ENCODE measurements at regions of chr11 and their contacts with region 1.

Region 1: DNA sequence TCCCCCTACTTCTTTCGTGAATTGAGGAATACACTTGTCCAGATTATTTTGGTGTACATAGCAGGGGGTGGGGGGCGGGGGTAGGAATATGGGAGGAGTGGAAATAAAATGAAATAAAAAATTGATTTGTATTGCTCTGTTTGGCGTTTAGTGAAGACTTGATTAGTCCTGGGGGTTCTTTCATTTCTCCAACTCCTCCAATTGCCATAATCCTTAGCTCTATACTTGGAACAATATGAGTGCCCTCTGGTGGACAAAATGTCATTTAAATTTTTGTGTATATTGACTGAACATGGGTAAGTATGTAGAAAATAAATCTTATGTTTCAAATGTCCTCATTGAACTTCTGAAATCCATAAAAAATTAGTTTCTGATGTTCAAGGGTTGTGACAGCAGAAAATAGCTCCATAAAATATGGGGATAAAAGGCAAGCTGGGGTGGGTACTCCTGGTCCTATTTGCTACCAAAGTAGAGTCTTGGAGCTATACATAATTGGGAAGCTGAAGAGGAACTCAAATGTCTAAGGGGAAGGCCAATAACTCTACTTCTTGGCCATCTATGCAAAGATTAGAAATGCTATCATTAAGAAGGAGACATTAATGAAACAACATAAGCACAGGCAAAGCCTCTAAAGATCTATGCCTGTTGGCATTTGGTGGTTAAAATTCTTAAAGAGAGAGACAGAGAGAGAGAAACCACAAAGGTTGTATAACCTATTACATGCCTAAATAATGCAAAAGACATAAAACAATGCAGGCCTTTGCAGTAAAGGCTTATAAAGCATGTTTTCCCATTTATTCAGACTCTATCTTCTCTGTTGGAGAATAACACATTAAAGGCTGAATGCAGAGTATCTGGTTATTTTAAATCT is 421.6 kb downstream of the METTL15 start:
- DNase-seq: no peak
- ATAC-seq: peak in 2 of 4 donors; percentile 55 to 63
- H3K4me3 ChIP-seq: no peak overlapping the region
- H3K27ac ChIP-seq: no peak overlapping the region
- H3K4me1 ChIP-seq: no peaks in the 10 kb centered on the region
- H3K27me3 ChIP-seq: no peaks in the 10 kb centered on the region
- CTCF ChIP-seq: peak in 3 of 4 donors; percentile 13 to 27 (median 20)

Region 2: GRCh38 chr11:27612932-27613880 is 916.6 kb before region 1 on chr11:
- intact Hi-C with region 1: no loop called
- DNase-seq: no peak
- ATAC-seq: no peak
- H3K4me3 ChIP-seq: no peak overlapping the region
- H3K27ac ChIP-seq: no peak overlapping the region
- H3K4me1 ChIP-seq: no peaks in the 10 kb centered on the region
- H3K27me3 ChIP-seq: no peaks in the 10 kb centered on the region
- CTCF ChIP-seq: no peak

Region 3: DNA sequence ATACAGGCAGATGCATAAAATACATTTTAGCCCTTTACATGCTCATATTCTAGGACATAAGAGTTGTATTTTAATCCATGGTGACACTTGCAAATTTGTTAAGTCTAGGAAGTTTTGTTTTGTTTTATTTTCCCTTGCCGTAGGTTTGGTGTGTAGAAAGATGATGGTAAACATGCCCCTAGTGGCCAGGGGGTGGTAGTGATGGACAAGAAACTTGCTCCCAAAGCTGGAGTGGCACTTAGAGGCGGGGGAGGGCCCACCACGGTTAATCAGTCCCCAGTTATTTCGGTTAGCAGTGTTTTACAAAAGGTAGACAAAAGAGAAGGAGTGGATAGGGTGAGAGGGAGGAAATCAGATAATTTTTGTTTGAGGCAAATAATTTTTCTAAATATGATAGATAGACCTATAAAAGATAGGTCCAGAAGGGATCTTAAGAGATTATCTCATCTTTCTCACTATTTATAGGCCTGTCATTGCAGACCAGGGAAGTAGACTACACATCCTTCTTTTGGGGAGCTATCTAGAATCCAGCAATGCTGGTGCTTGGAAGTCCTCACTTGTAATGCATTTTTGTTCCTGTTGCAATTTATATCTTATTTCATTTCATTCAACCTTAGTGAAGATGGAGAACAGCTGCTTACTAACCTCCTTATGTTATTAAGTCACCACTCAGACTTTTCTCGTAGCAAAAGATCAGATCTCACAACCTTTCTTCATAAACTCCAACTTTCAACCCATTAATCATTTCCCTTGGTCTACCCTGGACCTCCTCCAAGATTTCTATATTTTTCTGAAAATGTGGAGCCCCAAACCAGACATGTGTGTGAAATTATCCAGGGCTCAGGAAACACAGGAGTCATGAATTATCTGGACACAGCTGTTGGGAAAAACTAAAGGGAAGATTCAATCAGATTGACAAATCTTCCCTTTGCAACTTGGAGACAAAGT is 823.6 kb before region 1 on chr11:
- intact Hi-C with region 1: loop called in 1 of 3 experiments (anchors 10 kb)
- DNase-seq: no peak
- ATAC-seq: peak in 3 of 4 donors; percentile 50 to 75 (median 60)
- H3K4me3 ChIP-seq: no peak overlapping the region
- H3K27ac ChIP-seq: no peak overlapping the region
- H3K4me1 ChIP-seq: peaks cover 0 to 4% (median 0%) of the 10 kb centered on the region in 3 donors
- H3K27me3 ChIP-seq: peaks cover 0 to 15% (median 1%) of the 10 kb centered on the region in 4 donors
- CTCF ChIP-seq: peak; percentile 30 to 63 (median 52)

Measured in pancreas (tissue), 10 donors.